Sigmoid colon (tissue), 7 donors: ENCODE measurements at regions of chr11 and their contacts with region 1.

Region 1: DNA sequence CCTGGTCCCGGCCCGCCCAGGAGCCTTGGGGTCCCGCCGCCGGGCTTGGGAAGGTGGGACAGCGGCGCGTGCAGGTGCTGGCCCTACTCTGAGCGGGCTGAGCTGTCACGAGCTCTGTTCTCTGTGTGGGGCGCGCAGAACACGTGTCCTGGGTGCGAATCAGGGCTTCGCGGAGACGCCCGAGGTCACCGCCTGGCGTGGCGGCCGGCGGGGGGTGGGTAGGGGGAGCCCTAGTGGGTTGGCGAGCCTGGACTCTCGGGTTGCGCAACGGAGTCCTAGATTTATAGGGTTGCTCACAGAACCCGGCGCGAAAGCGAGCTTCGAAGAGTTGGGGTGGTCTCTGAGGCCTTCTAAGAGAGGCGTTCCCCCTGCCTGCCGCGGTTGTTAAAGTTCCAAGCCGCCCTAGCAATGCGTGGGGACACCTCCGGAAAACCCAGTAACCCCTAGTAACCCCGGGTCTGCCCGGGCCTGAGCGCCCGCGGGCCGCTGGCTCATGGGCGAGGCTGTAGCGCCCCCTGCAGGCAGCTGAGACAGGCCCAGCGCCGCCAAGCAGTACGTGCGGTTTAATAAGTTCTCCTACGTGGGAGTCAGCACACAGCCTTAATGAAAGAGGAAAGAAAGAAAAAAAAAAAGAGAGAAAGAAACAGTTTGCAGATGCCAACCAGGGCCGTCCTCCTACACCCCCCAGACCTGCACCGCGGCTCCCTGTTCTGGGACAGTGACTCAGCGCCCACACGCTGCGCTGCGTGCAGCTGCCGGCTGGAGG is 2.8 kb downstream of the ADM start:
- DNase-seq: peak; percentile 95
- H3K4me3 ChIP-seq: peak overlapping the region; percentile 65 to 82 (median 71)
- H3K27ac ChIP-seq: peak overlapping the region; percentile 84 to 97 (median 94)
- H3K4me1 ChIP-seq: peaks cover 0 to 59% (median 48%) of the 10 kb centered on the region in 4 donors
- H3K27me3 ChIP-seq: no peaks in the 10 kb centered on the region
- CTCF ChIP-seq: peak; percentile 97 to 99 (median 99)
- EP300 ChIP-seq: no peak
- POLR2A ChIP-seq: peak in 1 of 2 donors; percentile 37

Region 2: GRCh38 chr11:9613118-9613829 is 694.4 kb before region 1 on chr11:
- intact Hi-C with region 1: loop called (anchors 5 kb)
- DNase-seq: peak; percentile 97
- H3K4me3 ChIP-seq: peak overlapping the region; percentile 32 to 60 (median 48)
- H3K27ac ChIP-seq: peak overlapping the region; percentile 90 to 98 (median 98)
- H3K4me1 ChIP-seq: peaks cover 0 to 26% (median 18%) of the 10 kb centered on the region in 4 donors
- H3K27me3 ChIP-seq: no peaks in the 10 kb centered on the region
- CTCF ChIP-seq: peak; percentile 84 to 97 (median 92)
- EP300 ChIP-seq: peak in 1 of 4 donors; percentile 69
- POLR2A ChIP-seq: peak in 1 of 2 donors; percentile 50

Region 3: GRCh38 chr11:9757809-9758636 is 549.6 kb before region 1 on chr11:
- intact Hi-C with region 1: loop called (anchors 1 kb)
- DNase-seq: peak; percentile 94
- H3K4me3 ChIP-seq: peak overlapping the region; percentile 55 to 83 (median 64)
- H3K27ac ChIP-seq: peak overlapping the region; percentile 89 to 96 (median 92)
- H3K4me1 ChIP-seq: peaks cover 0 to 37% (median 29%) of the 10 kb centered on the region in 4 donors
- H3K27me3 ChIP-seq: no peaks in the 10 kb centered on the region
- CTCF ChIP-seq: peak in 3 of 4 experiments; percentile 19 to 97 (median 37)
- EP300 ChIP-seq: no peak
- POLR2A ChIP-seq: no peak

Region 4: GRCh38 chr11:9972989-9973388 is 334.6 kb before region 1 on chr11:
- intact Hi-C with region 1: loop called (anchors 5 kb)
- DNase-seq: no peak
- H3K4me3 ChIP-seq: no peak overlapping the region
- H3K27ac ChIP-seq: no peak overlapping the region
- H3K4me1 ChIP-seq: peaks cover 0 to 5% (median 2%) of the 10 kb centered on the region in 4 donors
- H3K27me3 ChIP-seq: no peaks in the 10 kb centered on the region
- CTCF ChIP-seq: peak; percentile 37 to 63 (median 60)
- EP300 ChIP-seq: no peak
- POLR2A ChIP-seq: no peak

Region 5: DNA sequence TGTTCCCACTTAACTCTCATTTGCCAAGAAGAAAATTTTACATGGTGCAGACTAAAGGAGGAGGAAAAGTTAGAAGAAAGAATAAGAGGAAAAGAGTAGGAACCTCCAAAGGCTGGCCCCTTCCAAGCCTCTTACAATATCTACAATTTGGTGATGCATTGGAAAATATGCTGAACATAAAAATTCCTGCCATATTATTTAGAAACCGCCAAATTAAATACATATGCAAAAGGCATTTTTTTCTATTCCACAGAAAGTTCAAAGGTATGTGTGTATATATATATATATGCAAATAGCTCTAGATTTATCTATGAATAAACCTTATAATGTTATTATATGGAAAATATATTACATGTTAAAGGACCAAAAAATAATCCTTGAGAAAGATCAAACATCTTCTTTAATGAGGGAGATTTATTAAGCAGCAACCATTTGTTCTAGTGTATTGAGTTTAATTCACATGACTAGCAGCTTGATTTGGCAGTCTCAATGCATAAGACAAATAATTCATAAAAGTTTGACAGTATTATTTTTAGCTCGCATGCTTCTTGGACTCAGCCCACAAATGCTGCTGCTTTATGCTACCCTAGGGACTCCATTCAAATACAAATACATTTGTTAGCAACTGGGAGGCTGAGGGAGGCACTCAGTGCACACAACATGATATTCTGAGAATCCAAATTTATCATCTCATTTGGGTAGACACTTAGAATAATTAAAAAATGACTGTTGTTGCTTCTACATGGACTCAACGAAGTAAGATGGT is 198.5 kb before region 1 on chr11:
- intact Hi-C with region 1: loop called (anchors 5 kb)
- DNase-seq: no peak
- H3K4me3 ChIP-seq: no peak overlapping the region
- H3K27ac ChIP-seq: peak overlapping the region; percentile 19 to 72 (median 44)
- H3K4me1 ChIP-seq: peaks cover 0 to 33% (median 23%) of the 10 kb centered on the region in 4 donors
- H3K27me3 ChIP-seq: no peaks in the 10 kb centered on the region
- CTCF ChIP-seq: no peak
- EP300 ChIP-seq: peak in 1 of 4 donors; percentile 17
- POLR2A ChIP-seq: no peak

Region 6: GRCh38 chr11:10293423-10294289 is 14.0 kb before region 1 on chr11 and contains the start of gene SBF2:
- intact Hi-C with region 1: loop called (anchors 1 kb)
- DNase-seq: peak; percentile 95
- H3K4me3 ChIP-seq: peak within 1 kb of the TSS; percentile 86 to 99 (median 92)
- H3K27ac ChIP-seq: peak within 1 kb of the TSS; percentile 98 to 99 (median 98)
- H3K4me1 ChIP-seq: peaks cover 0 to 55% (median 37%) of the 10 kb centered on the region in 4 donors
- H3K27me3 ChIP-seq: no peaks in the 10 kb centered on the region
- CTCF ChIP-seq: no peak
- EP300 ChIP-seq: peak in 2 of 4 donors; percentile 24 to 47
- POLR2A ChIP-seq: peak; percentile 64 to 65
- total RNA-seq, gene SBF2: 47.1 to 67.5 (median 59.5) TPM

Region 7: GRCh38 chr11:10750838-10751580 is 443.4 kb after region 1 on chr11 and contains the start of gene CTR9:
- intact Hi-C with region 1: no loop called
- DNase-seq: peak; percentile 96
- H3K4me3 ChIP-seq: peak within 1 kb of the TSS; percentile 70 to 93 (median 84)
- H3K27ac ChIP-seq: peak within 1 kb of the TSS; percentile 88 to 94 (median 92)
- H3K4me1 ChIP-seq: peaks cover 0 to 17% (median 13%) of the 10 kb centered on the region in 4 donors
- H3K27me3 ChIP-seq: no peaks in the 10 kb centered on the region
- CTCF ChIP-seq: no peak
- EP300 ChIP-seq: no peak
- POLR2A ChIP-seq: peak; percentile 87 to 90
- total RNA-seq, gene CTR9: 11.6 to 18.4 (median 15.7) TPM